Esophagus muscularis mucosa (tissue), 4 donors: ENCODE measurements at regions of chr13 and their contacts with region 1.

Region 1: GRCh38 chr13:20353973-20354372 is 121.9 kb upstream of the GJB6 start:
- DNase-seq: no peak
- H3K4me3 ChIP-seq: no peak overlapping the region
- H3K27ac ChIP-seq: no peak overlapping the region
- H3K4me1 ChIP-seq: no peaks in the 10 kb centered on the region
- H3K27me3 ChIP-seq: no peaks in the 10 kb centered on the region
- CTCF ChIP-seq: peak in 1 of 3 experiments; percentile 5
- EP300 ChIP-seq: no peak
- POLR2A ChIP-seq: no peak

Region 2: GRCh38 chr13:20401931-20402856 is 48.2 kb after region 1 on chr13:
- intact Hi-C with region 1: loop called (anchors 5 kb)
- DNase-seq: no peak
- H3K4me3 ChIP-seq: no peak overlapping the region
- H3K27ac ChIP-seq: no peak overlapping the region
- H3K4me1 ChIP-seq: no peaks in the 10 kb centered on the region
- H3K27me3 ChIP-seq: no peaks in the 10 kb centered on the region
- CTCF ChIP-seq: no peak
- EP300 ChIP-seq: no peak
- POLR2A ChIP-seq: no peak

Region 3: DNA sequence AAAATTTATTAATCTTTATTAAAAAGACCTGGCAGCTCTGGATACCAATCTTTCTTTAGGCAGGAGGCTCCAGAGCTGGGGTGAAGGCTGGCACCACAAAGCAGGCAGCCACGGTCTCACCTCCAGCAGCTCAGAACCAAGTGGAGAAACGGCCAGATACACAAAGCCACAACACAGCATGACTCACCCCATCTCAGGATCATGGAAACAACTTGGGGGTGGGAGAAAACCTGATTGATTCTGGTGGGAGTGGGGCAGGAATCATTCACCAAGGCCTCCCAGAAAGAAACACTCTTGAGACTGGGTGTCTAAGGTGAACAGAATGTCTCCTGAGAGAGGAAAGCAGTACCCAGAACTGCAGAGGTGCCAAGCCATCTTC is 107.5 kb after region 1 on chr13:
- intact Hi-C with region 1: no loop called
- DNase-seq: peak; percentile 80
- H3K4me3 ChIP-seq: no peak overlapping the region
- H3K27ac ChIP-seq: no peak overlapping the region
- H3K4me1 ChIP-seq: peaks cover 19 to 33% (median 23%) of the 10 kb centered on the region in 4 donors
- H3K27me3 ChIP-seq: no peaks in the 10 kb centered on the region
- CTCF ChIP-seq: no peak
- EP300 ChIP-seq: no peak
- POLR2A ChIP-seq: no peak